PC-3 (cell line): ENCODE measurements at regions of chr2 and their contacts with region 1.

Region 1: GRCh38 chr2:95068256-95068655 is 42.7 kb downstream of the MAL start:
- DNase-seq: no peak
- ATAC-seq: no peak
- H3K4me3 ChIP-seq: no peak overlapping the region
- H3K27ac ChIP-seq: no peak overlapping the region
- H3K4me1 ChIP-seq: no peaks in the 10 kb centered on the region
- H3K27me3 ChIP-seq: no peaks in the 10 kb centered on the region
- CTCF ChIP-seq: no peak

Region 2: DNA sequence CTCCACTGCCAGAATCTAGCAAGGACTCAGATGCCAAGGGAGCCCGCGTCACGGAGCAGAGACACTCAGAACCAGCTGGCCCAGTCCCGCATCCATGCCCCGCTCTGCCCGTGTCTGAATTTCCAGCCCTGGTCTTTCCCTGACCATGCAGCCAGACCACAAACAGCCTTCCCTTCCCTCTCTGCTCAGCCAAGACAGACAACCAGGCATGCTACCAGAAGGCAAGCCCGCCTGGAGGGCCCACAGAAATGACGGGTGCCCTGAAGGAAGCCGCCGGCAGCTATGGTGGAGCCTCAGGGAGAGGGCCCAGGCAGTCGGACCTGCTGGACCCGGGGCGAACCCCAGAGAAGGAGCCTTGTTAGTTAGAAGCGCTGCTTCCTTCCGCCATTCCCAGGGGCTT is 87.8 kb before region 1 on chr2:
- CTCF ChIA-PET with region 1: interaction called, 11 read pairs
- POLR2A ChIA-PET with region 1: no interaction called
- intact Hi-C with region 1: no loop called
- DNase-seq: no peak
- ATAC-seq: no peak
- H3K4me3 ChIP-seq: no peak overlapping the region
- H3K27ac ChIP-seq: no peak overlapping the region
- H3K4me1 ChIP-seq: no peaks in the 10 kb centered on the region
- H3K27me3 ChIP-seq: peaks cover 24% of the 10 kb centered on the region
- CTCF ChIP-seq: no peak

Region 3: DNA sequence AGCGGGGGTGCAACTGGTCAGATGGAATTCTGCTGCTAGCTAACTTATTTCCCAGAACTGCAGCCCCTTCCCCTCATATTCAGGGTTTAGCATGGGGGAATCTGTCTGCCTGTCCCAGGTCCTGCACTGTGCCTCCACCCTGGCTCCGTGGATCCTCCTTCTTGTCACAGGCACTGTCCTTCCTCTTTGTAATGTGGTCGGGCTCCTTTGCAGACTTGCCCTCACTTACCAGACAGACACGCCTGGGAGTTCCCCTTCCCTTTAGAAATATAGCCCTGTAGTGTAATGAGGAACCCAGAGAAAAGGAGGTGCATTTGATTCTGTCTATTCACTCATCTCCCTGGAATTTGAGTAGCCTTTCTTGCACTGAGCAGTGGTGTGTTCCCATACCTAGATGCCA is 632.3 kb after region 1 on chr2:
- CTCF ChIA-PET with region 1: no interaction called
- POLR2A ChIA-PET with region 1: no interaction called
- intact Hi-C with region 1: no loop called
- DNase-seq: no peak
- ATAC-seq: no peak
- H3K4me3 ChIP-seq: no peak overlapping the region
- H3K27ac ChIP-seq: no peak overlapping the region
- H3K4me1 ChIP-seq: peaks cover 5% of the 10 kb centered on the region
- H3K27me3 ChIP-seq: no peaks in the 10 kb centered on the region; the same call in 1 of the 2 replicates
- CTCF ChIP-seq: no peak

Region 4: GRCh38 chr2:95719473-95720060 is 651.3 kb after region 1 on chr2:
- CTCF ChIA-PET with region 1: no interaction called
- POLR2A ChIA-PET with region 1: no interaction called
- intact Hi-C with region 1: no loop called
- DNase-seq: no peak
- ATAC-seq: no peak
- H3K4me3 ChIP-seq: no peak overlapping the region
- H3K27ac ChIP-seq: no peak overlapping the region
- H3K4me1 ChIP-seq: no peaks in the 10 kb centered on the region
- H3K27me3 ChIP-seq: no peaks in the 10 kb centered on the region
- CTCF ChIP-seq: no peak